Endothelial cell of umbilical vein (primary cell): ENCODE measurements at regions of chr11 and their contacts with region 1.

Region 1: GRCh38 chr11:14892036-14892567 is at the start of gene CYP2R1:
- DNase-seq: peak; percentile 98
- H3K4me3 ChIP-seq: peak within 1 kb of the TSS; percentile 52 to 73 (median 60)
- H3K27ac ChIP-seq: peak within 1 kb of the TSS; percentile 54
- H3K4me1 ChIP-seq: peaks cover 9% of the 10 kb centered on the region
- H3K27me3 ChIP-seq: no peaks in the 10 kb centered on the region
- CTCF ChIP-seq: no peak
- POLR2A ChIP-seq: no peak
- total RNA-seq, gene CYP2R1: 8.0 and 11.6 TPM in 2 replicates

Region 2: GRCh38 chr11:14519917-14520746 is 372.0 kb before region 1 on chr11 and contains the start of gene PSMA1:
- CTCF ChIA-PET with region 1: no interaction called
- POLR2A ChIA-PET with region 1: no interaction called
- dilution Hi-C with region 1: no loop called
- intact Hi-C with region 1: loop called (anchors 1 kb)
- DNase-seq: peak; percentile 98
- H3K4me3 ChIP-seq: peak within 1 kb of the TSS; percentile 86 to 97 (median 88)
- H3K27ac ChIP-seq: peak within 1 kb of the TSS; percentile 97
- H3K4me1 ChIP-seq: peaks cover 15% of the 10 kb centered on the region
- H3K27me3 ChIP-seq: no peaks in the 10 kb centered on the region
- CTCF ChIP-seq: no peak
- POLR2A ChIP-seq: peak; percentile 88
- total RNA-seq, gene PSMA1: 194 and 203 TPM in 2 replicates

Region 3: DNA sequence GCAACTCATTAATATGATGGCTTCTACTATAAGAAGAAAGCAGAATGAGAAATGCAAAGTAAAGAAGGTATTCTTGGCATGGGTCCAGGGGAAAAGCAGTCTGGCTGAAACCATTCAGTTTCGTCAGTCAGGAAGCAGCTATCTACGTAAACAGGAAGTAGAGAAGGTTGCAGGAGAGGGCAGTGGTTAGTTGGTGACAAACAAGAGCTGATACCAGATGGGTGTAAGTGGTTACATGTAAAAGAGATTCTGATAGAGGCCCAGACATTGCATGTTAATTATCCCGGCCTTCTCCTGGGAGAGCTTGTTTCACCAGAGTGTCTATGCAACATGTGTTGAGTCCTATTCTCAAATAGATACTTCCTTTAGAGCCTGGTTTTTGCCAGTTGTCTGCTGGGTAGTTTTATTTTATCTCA is 313.6 kb before region 1 on chr11:
- CTCF ChIA-PET with region 1: no interaction called
- POLR2A ChIA-PET with region 1: no interaction called
- dilution Hi-C with region 1: no loop called
- intact Hi-C with region 1: loop called (anchors 5 kb)
- DNase-seq: peak; percentile 87
- H3K4me3 ChIP-seq: peak overlapping the region in 1 of 3 experiments; percentile 11
- H3K27ac ChIP-seq: peak overlapping the region; percentile 53
- H3K4me1 ChIP-seq: peaks cover 12% of the 10 kb centered on the region
- H3K27me3 ChIP-seq: peaks cover 0 to 2% of the 10 kb centered on the region in 2 experiments
- CTCF ChIP-seq: no peak
- POLR2A ChIP-seq: no peak

Region 4: DNA sequence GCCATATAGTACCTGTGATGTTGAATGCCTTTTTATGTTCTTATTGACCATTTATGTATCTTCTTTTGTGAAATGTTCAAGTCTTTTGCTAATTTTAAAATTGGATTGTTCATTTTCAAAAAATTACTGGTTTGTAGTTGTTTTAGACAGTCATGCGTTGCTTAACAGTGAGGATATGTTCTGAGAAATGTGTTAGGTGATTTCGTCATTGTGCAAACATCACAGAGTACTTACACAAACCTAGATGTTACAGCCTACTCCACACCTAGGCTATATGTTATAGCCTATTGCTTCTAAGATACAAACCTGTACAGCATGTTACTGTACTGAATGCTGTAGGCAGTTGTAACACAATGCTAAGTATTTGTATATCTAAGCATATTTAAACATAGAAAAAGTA is 216.0 kb before region 1 on chr11:
- CTCF ChIA-PET with region 1: no interaction called
- POLR2A ChIA-PET with region 1: no interaction called
- dilution Hi-C with region 1: no loop called
- intact Hi-C with region 1: no loop called
- DNase-seq: no peak
- H3K4me3 ChIP-seq: no peak overlapping the region
- H3K27ac ChIP-seq: no peak overlapping the region
- H3K4me1 ChIP-seq: no peaks in the 10 kb centered on the region
- H3K27me3 ChIP-seq: no peaks in the 10 kb centered on the region
- CTCF ChIP-seq: no peak
- POLR2A ChIP-seq: no peak

Region 5: DNA sequence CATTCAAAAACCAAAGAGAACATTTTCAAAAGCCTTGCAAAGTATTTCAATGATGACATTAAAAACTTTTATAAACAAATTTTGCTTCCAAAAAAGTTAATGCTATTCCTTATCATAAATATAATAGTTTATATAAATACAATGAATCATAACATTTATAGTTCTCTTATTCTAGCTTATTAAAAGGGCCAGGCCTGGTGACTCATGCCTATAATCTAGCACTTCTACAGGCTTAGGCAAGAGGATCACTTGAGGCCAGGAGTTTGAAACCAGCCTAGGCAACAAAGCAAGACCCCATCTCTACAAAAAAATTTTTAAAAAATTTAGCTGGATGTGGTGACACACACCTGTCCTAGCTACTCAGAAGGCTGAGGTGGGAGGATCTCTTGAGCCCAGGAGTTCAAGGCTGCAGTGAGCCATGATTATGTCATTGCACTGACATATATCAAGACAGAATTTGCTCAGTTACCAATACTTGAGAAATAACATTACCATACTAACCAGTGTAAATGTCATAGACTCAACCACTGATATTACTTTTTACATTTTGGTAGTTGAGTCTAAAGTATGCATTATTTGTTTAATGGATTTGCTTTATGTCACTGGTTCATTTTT is 56.5 kb before region 1 on chr11:
- CTCF ChIA-PET with region 1: no interaction called
- POLR2A ChIA-PET with region 1: no interaction called
- dilution Hi-C with region 1: no loop called
- intact Hi-C with region 1: no loop called
- DNase-seq: no peak
- H3K4me3 ChIP-seq: no peak overlapping the region
- H3K27ac ChIP-seq: no peak overlapping the region
- H3K4me1 ChIP-seq: no peaks in the 10 kb centered on the region
- H3K27me3 ChIP-seq: no peaks in the 10 kb centered on the region
- CTCF ChIP-seq: no peak
- POLR2A ChIP-seq: no peak